K562 (cell line): ENCODE measurements at regions of chr17 and their contacts with region 1.

Region 1: DNA sequence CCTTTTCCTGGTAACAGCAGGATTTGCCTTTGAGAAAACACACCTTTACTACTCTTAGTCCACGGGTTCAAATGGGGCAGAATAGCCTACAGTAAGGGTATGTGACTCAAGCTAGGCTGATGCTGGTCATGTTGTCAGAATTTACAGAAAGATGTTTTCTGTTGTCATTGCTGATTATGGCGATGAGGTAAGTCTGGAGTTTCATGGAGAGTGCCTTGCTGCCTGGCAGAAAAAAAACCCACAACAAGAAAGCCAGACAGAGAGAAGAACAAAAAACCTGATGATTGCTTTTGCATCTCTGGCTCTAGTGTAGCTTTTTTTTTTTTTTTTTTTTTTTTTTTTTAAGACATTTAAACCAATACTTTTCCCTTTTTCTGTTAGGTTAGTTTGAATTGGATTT is 47.9 kb downstream of the SLC6A4 start:
- DNase-seq: no peak
- ATAC-seq: peak; percentile 48; the same call in 1 of the 3 replicates
- H3K4me3 ChIP-seq: no peak overlapping the region
- H3K27ac ChIP-seq: no peak overlapping the region
- H3K4me1 ChIP-seq: no peaks in the 10 kb centered on the region
- H3K27me3 ChIP-seq: no peaks in the 10 kb centered on the region
- CTCF ChIP-seq: no peak
- EP300 ChIP-seq: no peak
- POLR2A ChIP-seq: no peak
- RAD21 ChIP-seq: no peak

Region 2: DNA sequence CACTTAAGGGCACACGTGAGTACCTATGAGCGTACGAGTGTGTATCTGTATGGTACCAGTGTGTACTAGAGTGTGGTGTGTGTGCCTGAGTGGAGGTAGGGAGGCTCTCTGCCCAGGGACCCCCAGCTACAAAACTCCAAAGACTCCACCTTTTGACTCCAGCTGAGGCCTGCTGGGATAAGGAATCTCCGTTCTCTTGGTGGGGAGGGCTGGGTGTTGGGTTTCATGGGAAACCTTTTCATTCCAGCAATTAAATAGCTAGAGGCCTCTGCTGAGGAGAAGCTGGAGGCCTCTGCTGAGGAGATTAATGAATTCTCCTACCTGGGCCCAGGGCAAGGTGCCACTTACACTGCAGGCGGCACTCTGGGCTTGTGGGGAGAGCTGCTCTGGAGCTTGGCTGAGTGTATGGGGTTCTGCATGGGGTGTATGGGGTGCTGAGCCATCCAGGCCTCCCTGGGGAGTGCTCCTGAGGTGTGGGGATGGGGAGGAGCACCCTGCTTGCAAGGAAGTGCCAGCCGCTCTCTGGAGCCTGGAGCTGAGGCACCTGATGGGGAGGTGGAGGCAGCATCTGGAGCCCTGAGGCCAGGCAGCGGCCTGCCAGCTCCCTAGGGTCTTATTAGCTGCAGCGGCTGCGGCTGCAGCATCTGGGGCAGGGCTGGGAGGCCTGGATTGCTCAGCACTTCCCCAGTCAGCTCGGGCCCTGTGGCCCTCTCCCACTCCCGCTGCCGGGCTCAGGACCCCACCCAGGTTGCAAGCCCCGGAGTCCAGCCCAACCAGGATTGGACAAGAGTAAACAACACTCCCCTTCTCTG is 590.0 kb before region 1 on chr17:
- CTCF ChIA-PET with region 1: no interaction called
- POLR2A ChIA-PET with region 1: no interaction called
- in situ Hi-C with region 1: no loop called
- intact Hi-C with region 1: no loop called
- DNase-seq: no peak
- ATAC-seq: no peak
- H3K4me3 ChIP-seq: no peak overlapping the region
- H3K27ac ChIP-seq: no peak overlapping the region
- H3K4me1 ChIP-seq: peaks cover 13 to 46% of the 10 kb centered on the region in 2 experiments
- H3K27me3 ChIP-seq: no peaks in the 10 kb centered on the region
- CTCF ChIP-seq: no peak
- EP300 ChIP-seq: no peak
- POLR2A ChIP-seq: no peak
- RAD21 ChIP-seq: no peak

Region 3: GRCh38 chr17:30203471-30203981 is 16.0 kb after region 1 on chr17:
- CTCF ChIA-PET with region 1: no interaction called
- POLR2A ChIA-PET with region 1: interaction called, 11 read pairs
- in situ Hi-C with region 1: no loop called
- intact Hi-C with region 1: no loop called
- DNase-seq: peak; percentile 43 to 67 (median 54)
- ATAC-seq: peak; percentile 89
- H3K4me3 ChIP-seq: peak overlapping the region; percentile 14; the same call in 1 of the 2 replicates
- H3K27ac ChIP-seq: peak overlapping the region; percentile 43; the same call in 1 of the 3 replicates
- H3K4me1 ChIP-seq: peaks cover 4 to 9% of the 10 kb centered on the region in 2 experiments; a peak in 3 of 5 replicates
- H3K27me3 ChIP-seq: peaks cover 5 to 7% of the 10 kb centered on the region in 2 experiments; a peak in 3 of 5 replicates
- CTCF ChIP-seq: peak; percentile 48 to 51 (median 49)
- EP300 ChIP-seq: no peak
- POLR2A ChIP-seq: no peak
- RAD21 ChIP-seq: no peak; a peak in 1 of 4 replicates

Region 4: DNA sequence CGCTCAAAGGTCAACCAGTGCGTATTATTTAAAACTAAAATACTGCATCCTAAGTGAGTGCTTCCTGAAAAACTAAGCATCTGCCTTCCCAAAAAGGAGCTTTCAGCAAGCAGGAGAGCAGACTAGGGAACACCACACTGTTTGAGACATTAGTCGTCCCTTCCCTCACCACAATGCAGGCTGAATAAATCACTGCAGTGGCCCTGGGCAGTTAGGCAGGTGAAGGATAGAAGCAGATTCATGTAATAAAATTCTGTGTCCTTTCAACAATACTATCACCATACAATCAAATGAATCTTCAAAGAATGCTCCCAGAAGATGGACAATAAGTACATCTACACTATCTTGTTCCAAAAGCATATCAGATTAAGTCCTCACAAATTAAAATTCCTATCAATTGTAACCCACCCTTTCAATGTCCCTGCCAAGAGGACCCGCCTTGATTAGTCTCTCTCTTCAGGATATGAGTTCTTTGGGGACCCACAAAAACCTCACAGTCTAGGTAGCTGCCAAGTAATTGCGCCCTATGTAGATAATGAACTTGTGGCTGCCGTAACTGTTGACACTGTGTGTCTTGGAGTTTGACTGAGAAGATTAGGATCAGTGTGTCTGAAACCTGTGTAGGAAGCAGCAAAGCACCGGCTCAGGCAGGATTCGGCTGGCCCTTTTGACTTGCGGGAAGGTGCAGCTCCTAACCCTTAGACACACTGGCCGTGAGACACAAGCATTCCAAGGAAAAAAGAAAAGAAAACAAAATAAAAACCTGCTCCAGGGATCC is 65.6 kb after region 1 on chr17:
- CTCF ChIA-PET with region 1: no interaction called
- POLR2A ChIA-PET with region 1: no interaction called
- in situ Hi-C with region 1: no loop called
- intact Hi-C with region 1: loop called (anchors 5 kb)
- DNase-seq: peak in 1 of 4 experiments; percentile 31
- ATAC-seq: peak; percentile 64
- H3K4me3 ChIP-seq: no peak overlapping the region
- H3K27ac ChIP-seq: no peak overlapping the region
- H3K4me1 ChIP-seq: peaks cover 0 to 3% of the 10 kb centered on the region in 2 experiments; a peak in 3 of 5 replicates
- H3K27me3 ChIP-seq: no peaks in the 10 kb centered on the region
- CTCF ChIP-seq: no peak
- EP300 ChIP-seq: 0 out of 2 replicates have a peak, but pooled peaks have one; percentile 16
- POLR2A ChIP-seq: no peak
- RAD21 ChIP-seq: no peak